ENCODE measurements at regions of chr12 and their contacts with region 1.

Region 1: GRCh38 chr12:64392221-64392620 is 1.7 kb upstream of the C12orf56 start:
- DNase-seq: peak in 6 of 9 donors; percentile 18 to 52 (median 42)
- ATAC-seq: peak; percentile 57
- H3K4me3 ChIP-seq: no peak overlapping the region
- H3K4me3 Mint-ChIP-seq: peak overlapping the region; percentile 21 to 86 (median 52)
- H3K27ac ChIP-seq: no peak overlapping the region
- H3K27ac Mint-ChIP-seq: no peak overlapping the region
- H3K4me1 ChIP-seq: no peaks in the 10 kb centered on the region
- H3K4me1 Mint-ChIP-seq: peaks cover 2 to 26% (median 17%) of the 10 kb centered on the region in 7 donors
- H3K27me3 ChIP-seq: no peaks in the 10 kb centered on the region
- H3K27me3 Mint-ChIP-seq: peaks cover 0 to 22% (median 0%) of the 10 kb centered on the region in 5 donors

Region 2: DNA sequence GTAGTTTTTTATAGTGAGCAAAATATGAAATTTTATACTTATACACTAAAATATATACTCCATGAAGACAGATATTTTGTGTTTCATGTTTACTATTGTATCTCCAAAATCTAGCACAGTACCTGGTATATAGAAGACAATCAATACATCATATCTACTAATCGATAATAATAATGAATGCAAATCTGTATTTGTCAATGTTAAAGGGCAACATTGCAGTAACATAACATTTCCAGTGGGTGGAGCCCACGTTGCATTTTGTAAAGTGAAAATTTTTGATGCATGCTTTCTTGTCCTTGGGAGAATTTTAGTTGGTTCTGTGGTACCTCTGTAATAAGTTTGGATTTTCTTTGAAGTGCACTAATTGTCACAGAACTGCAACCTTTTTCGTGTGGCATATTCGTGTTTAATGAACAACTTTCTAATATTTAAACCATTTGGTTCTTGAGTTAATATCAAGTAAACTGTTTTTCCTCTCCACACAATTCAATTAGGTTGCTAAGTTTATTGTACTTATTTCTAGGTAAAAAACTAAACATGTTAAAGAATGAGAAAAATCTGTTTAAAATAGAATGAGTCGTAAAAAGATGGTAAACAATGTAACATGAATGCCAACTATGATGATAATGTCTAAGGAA is 1288.6 kb before region 1 on chr12:
- CTCF ChIA-PET with region 1: no interaction called
- POLR2A ChIA-PET with region 1: no interaction called
- intact Hi-C with region 1: loop called in 1 of 2 experiments (anchors 5 kb)
- DNase-seq: peak in 4 of 9 donors; percentile 5 to 14 (median 6)
- ATAC-seq: no peak
- H3K4me3 ChIP-seq: no peak overlapping the region
- H3K4me3 Mint-ChIP-seq: no peak overlapping the region
- H3K27ac ChIP-seq: no peak overlapping the region
- H3K27ac Mint-ChIP-seq: no peak overlapping the region
- H3K4me1 ChIP-seq: no peaks in the 10 kb centered on the region
- H3K4me1 Mint-ChIP-seq: no peaks in the 10 kb centered on the region
- H3K27me3 ChIP-seq: no peaks in the 10 kb centered on the region
- H3K27me3 Mint-ChIP-seq: peaks cover 0 to 13% (median 5%) of the 10 kb centered on the region in 5 donors

Region 3: DNA sequence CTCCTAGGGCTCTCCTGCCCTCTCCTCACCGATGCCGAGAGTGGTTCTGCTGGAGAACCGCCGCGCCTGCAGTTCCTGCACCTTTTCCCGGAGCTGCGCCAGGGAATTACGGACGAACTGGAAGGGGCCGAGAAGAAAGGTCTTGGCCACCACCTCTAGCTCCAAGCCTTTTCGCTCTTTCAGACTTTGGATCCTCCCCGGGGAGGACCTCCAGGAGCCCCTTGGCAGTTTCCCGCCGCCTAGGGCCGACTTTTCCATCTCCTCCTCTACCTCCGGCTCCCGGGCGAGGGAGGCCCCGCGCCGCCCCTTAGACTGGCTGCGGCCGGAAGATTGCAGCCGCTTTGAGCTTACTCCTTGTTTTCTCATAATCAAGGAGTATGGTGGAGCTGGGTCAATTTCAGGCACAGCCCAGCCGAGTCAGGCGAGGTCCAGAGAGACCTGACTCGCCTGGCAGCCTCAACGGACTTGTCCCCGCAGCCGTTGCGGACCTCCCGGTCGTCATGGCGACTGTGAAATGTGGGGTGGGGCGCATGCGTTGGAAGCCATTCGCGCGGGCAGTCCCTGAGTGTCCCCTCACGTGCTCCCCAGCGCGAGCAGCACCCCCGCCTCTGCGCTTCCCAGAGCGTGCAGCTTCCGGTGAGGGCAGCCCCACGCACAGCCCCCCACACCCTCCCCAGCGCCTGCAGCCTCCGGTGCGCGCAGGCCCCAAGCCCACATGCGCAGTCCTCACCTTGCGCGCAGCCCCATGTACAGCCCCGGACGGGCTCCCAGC is 724.0 kb before region 1 on chr12 and contains the start of gene DPY19L2:
- CTCF ChIA-PET with region 1: no interaction called
- POLR2A ChIA-PET with region 1: no interaction called
- intact Hi-C with region 1: loop called in 1 of 2 experiments (anchors 5 kb)
- DNase-seq: peak in 8 of 9 donors; percentile 5 to 50 (median 27)
- ATAC-seq: peak; percentile 41
- H3K4me3 ChIP-seq: peak within 1 kb of the TSS; percentile 46
- H3K4me3 Mint-ChIP-seq: peak within 1 kb of the TSS; percentile 78 to 89 (median 84)
- H3K27ac ChIP-seq: peak within 1 kb of the TSS; percentile 35
- H3K27ac Mint-ChIP-seq: peak within 1 kb of the TSS in 4 of 9 donors; percentile 34 to 74 (median 54)
- H3K4me1 ChIP-seq: no peaks in the 10 kb centered on the region
- H3K4me1 Mint-ChIP-seq: peaks cover 8 to 26% (median 24%) of the 10 kb centered on the region in 7 donors
- H3K27me3 ChIP-seq: no peaks in the 10 kb centered on the region
- H3K27me3 Mint-ChIP-seq: peaks cover 19 to 53% (median 28%) of the 10 kb centered on the region in 5 donors
- total RNA-seq, gene DPY19L2: 0.34 to 3.1 (median 1.4) TPM

Region 4: GRCh38 chr12:63843721-63844390 is 548.4 kb before region 1 on chr12:
- CTCF ChIA-PET with region 1: no interaction called
- POLR2A ChIA-PET with region 1: no interaction called
- intact Hi-C with region 1: loop called (anchors 1 kb)
- DNase-seq: peak; percentile 50 to 76 (median 70)
- ATAC-seq: peak; percentile 97
- H3K4me3 ChIP-seq: peak overlapping the region; percentile 57
- H3K4me3 Mint-ChIP-seq: peak overlapping the region; percentile 32 to 93 (median 67)
- H3K27ac ChIP-seq: no peak overlapping the region
- H3K27ac Mint-ChIP-seq: no peak overlapping the region
- H3K4me1 ChIP-seq: no peaks in the 10 kb centered on the region
- H3K4me1 Mint-ChIP-seq: peaks cover 0 to 12% (median 10%) of the 10 kb centered on the region in 7 donors
- H3K27me3 ChIP-seq: peaks cover 3 to 11% of the 10 kb centered on the region in 2 donors
- H3K27me3 Mint-ChIP-seq: peaks cover 17 to 47% (median 35%) of the 10 kb centered on the region in 5 donors

Region 5: GRCh38 chr12:64273527-64274403 is 118.5 kb before region 1 on chr12:
- CTCF ChIA-PET with region 1: interaction called, 7 read pairs
- POLR2A ChIA-PET with region 1: no interaction called
- intact Hi-C with region 1: loop called (anchors 1 kb)
- DNase-seq: peak in 3 of 9 donors; percentile 4 to 7 (median 4)
- ATAC-seq: peak; percentile 57
- H3K4me3 ChIP-seq: no peak overlapping the region
- H3K4me3 Mint-ChIP-seq: no peak overlapping the region
- H3K27ac ChIP-seq: no peak overlapping the region
- H3K27ac Mint-ChIP-seq: no peak overlapping the region
- H3K4me1 ChIP-seq: no peaks in the 10 kb centered on the region
- H3K4me1 Mint-ChIP-seq: peaks cover 0 to 4% (median 0%) of the 10 kb centered on the region in 7 donors
- H3K27me3 ChIP-seq: no peaks in the 10 kb centered on the region
- H3K27me3 Mint-ChIP-seq: no peaks in the 10 kb centered on the region

Region 6: GRCh38 chr12:64403707-64404469 is 11.7 kb after region 1 on chr12 and contains the start of gene XPOT:
- CTCF ChIA-PET with region 1: no interaction called
- POLR2A ChIA-PET with region 1: interaction called, 7 read pairs
- intact Hi-C with region 1: loop called in 1 of 2 experiments (anchors 1 kb)
- DNase-seq: peak; percentile 85 to 94 (median 92)
- ATAC-seq: peak; percentile 97
- H3K4me3 ChIP-seq: peak within 1 kb of the TSS; percentile 81
- H3K4me3 Mint-ChIP-seq: peak within 1 kb of the TSS; percentile 90 to 99 (median 96)
- H3K27ac ChIP-seq: peak within 1 kb of the TSS; percentile 82
- H3K27ac Mint-ChIP-seq: peak within 1 kb of the TSS; percentile 84 to 98 (median 95)
- H3K4me1 ChIP-seq: peaks cover 0 to 8% of the 10 kb centered on the region in 2 donors
- H3K4me1 Mint-ChIP-seq: peaks cover 8 to 41% (median 25%) of the 10 kb centered on the region in 7 donors
- H3K27me3 ChIP-seq: no peaks in the 10 kb centered on the region
- H3K27me3 Mint-ChIP-seq: no peaks in the 10 kb centered on the region
- total RNA-seq, gene XPOT: 46.6 to 118 (median 75.1) TPM

Region 7: DNA sequence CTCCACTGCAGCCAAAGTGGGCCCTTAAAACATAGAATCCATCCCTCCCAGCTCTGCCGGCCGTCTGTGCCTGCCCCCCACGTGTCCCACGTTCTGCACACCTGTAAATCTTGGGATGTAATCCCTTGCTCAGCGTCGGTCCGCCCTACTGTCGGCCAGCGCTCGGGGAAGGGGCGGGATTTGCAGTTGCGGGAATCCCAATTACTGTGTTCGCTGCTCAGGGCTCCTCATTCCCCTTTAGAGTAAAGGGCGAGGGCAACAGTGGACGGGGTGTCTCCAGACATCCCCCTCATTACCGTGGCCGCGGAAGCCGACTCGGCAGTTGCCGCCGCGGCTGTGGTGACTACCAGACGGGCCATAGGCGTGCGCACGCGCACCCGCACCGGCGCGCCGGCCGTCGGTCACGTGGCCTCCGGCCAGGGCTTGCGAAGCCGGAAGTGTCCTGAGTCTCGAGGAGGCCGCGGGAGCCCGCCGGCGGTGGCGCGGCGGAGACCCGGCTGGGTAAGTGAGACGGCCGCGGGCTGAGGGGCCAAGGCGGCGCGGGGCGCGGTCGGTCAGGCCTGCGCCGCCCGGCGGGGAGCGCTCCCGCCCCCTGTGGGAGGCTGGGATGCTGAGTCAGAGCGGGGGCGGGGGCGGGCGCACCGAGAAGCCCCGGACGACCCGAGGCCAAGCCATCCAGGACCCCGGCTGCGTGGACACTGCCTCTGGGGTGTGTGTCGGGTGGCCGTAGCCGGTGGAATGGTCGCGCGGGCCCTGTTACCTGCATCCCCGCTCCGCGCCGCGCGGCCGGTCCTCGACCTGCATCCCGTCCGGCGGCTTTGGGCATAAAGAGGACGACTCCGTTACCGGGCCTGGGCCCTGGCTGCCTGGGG is 59.7 kb after region 1 on chr12 and contains the start of gene TBK1:
- CTCF ChIA-PET with region 1: interaction called, 3 read pairs
- POLR2A ChIA-PET with region 1: no interaction called
- intact Hi-C with region 1: loop called in 1 of 2 experiments (anchors 2 kb)
- DNase-seq: peak in 8 of 9 donors; percentile 21 to 80 (median 34)
- ATAC-seq: peak; percentile 78
- H3K4me3 ChIP-seq: peak within 1 kb of the TSS; percentile 61
- H3K4me3 Mint-ChIP-seq: peak within 1 kb of the TSS; percentile 90 to 99 (median 94)
- H3K27ac ChIP-seq: peak within 1 kb of the TSS; percentile 74
- H3K27ac Mint-ChIP-seq: peak within 1 kb of the TSS; percentile 86 to 95 (median 94)
- H3K4me1 ChIP-seq: peaks cover 19 to 24% of the 10 kb centered on the region in 2 donors
- H3K4me1 Mint-ChIP-seq: peaks cover 20 to 54% (median 41%) of the 10 kb centered on the region in 7 donors
- H3K27me3 ChIP-seq: no peaks in the 10 kb centered on the region
- H3K27me3 Mint-ChIP-seq: no peaks in the 10 kb centered on the region
- total RNA-seq, gene TBK1: 9.0 to 34.0 (median 12.1) TPM

Measured in naive thymus-derived CD4-positive, alpha-beta T cell (primary cell).